H1 (cell line): ENCODE measurements at regions of chr1 and their contacts with region 1.

Region 1: DNA sequence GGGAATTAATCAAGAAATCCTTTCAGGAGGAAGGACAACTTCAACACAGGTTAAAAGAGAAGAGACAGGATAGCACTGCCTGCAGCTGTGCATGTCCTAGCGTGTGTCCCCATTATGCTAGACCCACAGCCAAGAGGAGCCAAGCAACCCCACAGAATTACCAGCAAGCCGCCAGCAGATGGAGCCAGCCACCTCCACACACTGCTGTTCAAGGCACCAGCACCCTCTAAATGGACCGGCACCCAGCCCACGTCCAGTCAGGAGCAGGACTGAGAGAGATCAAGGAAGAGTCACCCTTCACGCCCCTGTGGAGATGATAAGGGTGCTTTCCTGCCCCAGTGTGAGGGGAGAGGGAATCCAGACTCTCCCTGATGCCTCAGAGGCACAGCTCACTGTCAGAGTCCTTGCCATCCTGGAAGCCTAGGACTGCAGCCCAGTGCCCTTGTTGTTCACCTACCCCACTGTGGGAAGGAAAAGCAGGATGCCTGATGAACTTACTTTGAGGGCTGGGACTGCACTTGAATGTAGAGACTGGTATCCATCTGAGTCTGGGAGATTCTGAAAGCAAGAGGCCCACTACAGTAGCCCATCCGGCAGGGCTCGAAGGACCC is 37.1 kb upstream of the CTTNBP2NL start:
- DNase-seq: peak; percentile 41 to 82
- H3K4me3 ChIP-seq: no peak overlapping the region
- H3K27ac ChIP-seq: no peak overlapping the region
- H3K4me1 ChIP-seq: peaks cover 0 to 6% (median 0%) of the 10 kb centered on the region in 4 experiments; a peak in 1 of 7 replicates
- H3K27me3 ChIP-seq: no peaks in the 10 kb centered on the region; a peak in 1 of 7 replicates
- CTCF ChIP-seq: peak; percentile 85 to 97 (median 96)
- EP300 ChIP-seq: no peak
- POLR2A ChIP-seq: no peak
- RAD21 ChIP-seq: peak; percentile 83 to 89

Region 2: GRCh38 chr1:112285746-112286145 is 73.2 kb before region 1 on chr1:
- CTCF ChIA-PET with region 1: no interaction called
- POLR2A ChIA-PET with region 1: no interaction called
- DNase-seq: no peak
- H3K4me3 ChIP-seq: no peak overlapping the region
- H3K27ac ChIP-seq: no peak overlapping the region
- H3K4me1 ChIP-seq: no peaks in the 10 kb centered on the region
- H3K27me3 ChIP-seq: no peaks in the 10 kb centered on the region
- CTCF ChIP-seq: no peak
- EP300 ChIP-seq: no peak
- POLR2A ChIP-seq: no peak
- RAD21 ChIP-seq: no peak

Region 3: GRCh38 chr1:112337028-112337531 is 21.8 kb before region 1 on chr1:
- CTCF ChIA-PET with region 1: interaction called, 34 read pairs
- POLR2A ChIA-PET with region 1: no interaction called
- DNase-seq: no peak
- H3K4me3 ChIP-seq: no peak overlapping the region
- H3K27ac ChIP-seq: no peak overlapping the region
- H3K4me1 ChIP-seq: no peaks in the 10 kb centered on the region
- H3K27me3 ChIP-seq: no peaks in the 10 kb centered on the region
- CTCF ChIP-seq: peak; percentile 73 to 79 (median 74)
- EP300 ChIP-seq: no peak
- POLR2A ChIP-seq: no peak
- RAD21 ChIP-seq: peak; percentile 76 to 85

Region 4: DNA sequence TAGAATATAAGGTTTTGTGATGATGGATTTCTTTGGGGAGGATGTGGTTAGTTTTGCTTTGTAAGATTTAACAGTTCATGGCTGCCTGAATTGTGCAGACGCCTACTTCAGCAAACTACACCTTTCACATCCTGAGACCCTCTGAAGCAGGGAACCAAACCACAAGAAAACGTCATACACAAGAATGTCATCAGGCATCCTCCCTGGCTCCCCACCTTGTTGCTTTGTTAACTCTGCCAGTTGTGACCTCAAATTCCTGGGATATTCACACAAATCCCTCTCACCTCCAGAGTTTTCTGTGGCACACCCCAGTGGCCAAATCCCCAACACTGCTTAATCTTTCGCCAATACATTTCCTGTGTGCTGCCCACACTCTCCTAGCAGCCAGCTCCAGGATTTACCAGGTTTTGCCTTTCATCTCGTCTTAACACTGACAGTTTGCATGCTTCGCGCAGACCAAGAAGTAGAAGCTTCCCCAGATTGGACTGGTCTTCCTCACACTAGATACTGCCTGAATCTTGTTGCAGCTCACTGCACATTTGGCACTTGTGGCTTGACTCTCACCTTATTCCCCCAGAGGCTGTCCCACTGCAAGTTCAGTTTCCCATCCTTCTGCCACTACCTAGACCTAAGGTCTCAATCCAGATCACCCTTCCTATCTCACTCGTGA is 14.0 kb before region 1 on chr1:
- CTCF ChIA-PET with region 1: interaction called, 34 read pairs
- POLR2A ChIA-PET with region 1: no interaction called
- DNase-seq: no peak
- H3K4me3 ChIP-seq: no peak overlapping the region
- H3K27ac ChIP-seq: no peak overlapping the region
- H3K4me1 ChIP-seq: no peaks in the 10 kb centered on the region
- H3K27me3 ChIP-seq: no peaks in the 10 kb centered on the region
- CTCF ChIP-seq: no peak
- EP300 ChIP-seq: no peak
- POLR2A ChIP-seq: no peak
- RAD21 ChIP-seq: no peak; a peak in 1 of 4 replicates

Region 5: DNA sequence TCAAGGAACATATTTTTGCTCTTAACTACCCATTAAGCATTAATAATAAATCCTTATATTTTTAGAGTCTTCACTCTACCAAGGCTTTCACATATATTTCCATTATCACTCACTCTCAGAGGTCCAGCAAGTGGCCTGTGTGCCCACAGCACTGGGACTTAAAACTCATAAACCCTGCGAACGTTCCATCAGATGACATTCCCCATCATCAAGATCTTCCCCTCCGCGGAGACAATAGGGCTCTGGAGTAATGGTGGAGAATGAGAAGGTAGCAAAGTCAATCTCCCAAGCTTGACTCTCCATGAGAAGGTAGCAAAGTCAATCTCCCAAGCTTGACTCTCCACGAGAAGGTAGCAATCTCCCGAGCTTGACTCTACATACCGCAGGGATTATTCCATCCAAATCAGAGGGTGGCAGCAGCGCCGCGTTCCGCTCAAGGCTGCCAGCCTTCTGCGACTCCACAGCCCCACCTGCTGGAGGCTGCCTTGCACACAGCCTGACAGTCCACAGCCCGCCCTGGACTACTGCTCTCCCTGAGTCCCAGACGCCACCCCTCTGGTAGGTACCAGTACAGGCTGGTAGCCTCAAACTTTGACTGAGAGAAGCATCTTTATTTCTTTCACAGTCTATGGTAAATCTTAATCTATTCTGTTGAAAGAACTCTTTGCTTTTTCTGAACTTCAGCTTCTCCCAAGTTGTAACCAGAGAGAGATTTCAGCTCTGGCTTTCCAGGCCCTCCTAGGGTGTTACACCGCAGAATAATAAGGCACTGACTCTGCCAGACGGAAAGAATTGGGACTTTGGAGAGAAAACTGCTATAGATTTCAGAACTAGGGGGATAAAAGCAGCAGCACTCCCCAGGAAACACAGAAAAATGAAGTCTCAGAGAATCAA is 10.7 kb after region 1 on chr1:
- CTCF ChIA-PET with region 1: interaction called, 89 read pairs
- POLR2A ChIA-PET with region 1: no interaction called
- DNase-seq: peak; percentile 78 to 98
- H3K4me3 ChIP-seq: no peak overlapping the region
- H3K27ac ChIP-seq: no peak overlapping the region
- H3K4me1 ChIP-seq: no peaks in the 10 kb centered on the region
- H3K27me3 ChIP-seq: no peaks in the 10 kb centered on the region
- CTCF ChIP-seq: peak; percentile 99 to 100 (median 99)
- EP300 ChIP-seq: no peak
- POLR2A ChIP-seq: no peak
- RAD21 ChIP-seq: peak; percentile 94 to 98

Region 6: DNA sequence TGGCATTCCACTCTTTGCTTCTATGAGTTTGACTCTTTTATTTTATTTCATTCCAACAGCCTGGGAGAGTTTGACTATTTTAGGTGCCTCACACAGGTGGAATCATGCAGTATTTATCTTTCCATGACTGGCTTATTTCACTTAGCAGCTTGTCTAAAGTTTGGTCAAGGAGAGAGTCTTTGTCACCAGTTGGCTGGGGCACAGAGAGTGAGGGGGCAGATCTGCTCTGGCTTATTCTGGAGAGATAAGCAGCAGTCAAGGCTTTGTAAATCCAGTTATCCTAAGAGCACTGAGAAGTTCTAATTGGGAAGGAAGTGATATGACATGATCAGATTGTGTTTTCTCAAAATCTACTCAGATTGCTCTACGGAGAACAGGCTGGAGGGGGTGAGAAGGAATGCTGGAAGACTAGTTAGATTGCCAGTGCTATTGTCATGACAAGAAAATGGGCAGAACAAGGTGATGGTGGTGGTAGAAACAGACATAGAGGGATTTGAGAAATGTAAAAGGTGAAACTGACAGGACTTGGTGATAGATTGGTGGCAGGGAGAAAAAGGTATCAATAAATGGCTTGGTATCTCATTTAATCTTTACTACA is 25.0 kb after region 1 on chr1:
- CTCF ChIA-PET with region 1: interaction called, 15 read pairs
- POLR2A ChIA-PET with region 1: no interaction called
- DNase-seq: no peak
- H3K4me3 ChIP-seq: no peak overlapping the region
- H3K27ac ChIP-seq: no peak overlapping the region
- H3K4me1 ChIP-seq: peaks cover 0 to 3% (median 0%) of the 10 kb centered on the region in 4 experiments; a peak in 3 of 7 replicates
- H3K27me3 ChIP-seq: no peaks in the 10 kb centered on the region
- CTCF ChIP-seq: no peak
- EP300 ChIP-seq: no peak
- POLR2A ChIP-seq: no peak
- RAD21 ChIP-seq: no peak

Region 7: GRCh38 chr1:112431038-112431437 is 72.1 kb after region 1 on chr1:
- CTCF ChIA-PET with region 1: no interaction called
- POLR2A ChIA-PET with region 1: no interaction called
- DNase-seq: no peak
- H3K4me3 ChIP-seq: no peak overlapping the region
- H3K27ac ChIP-seq: no peak overlapping the region
- H3K4me1 ChIP-seq: no peaks in the 10 kb centered on the region
- H3K27me3 ChIP-seq: no peaks in the 10 kb centered on the region
- CTCF ChIP-seq: no peak
- EP300 ChIP-seq: no peak
- POLR2A ChIP-seq: no peak
- RAD21 ChIP-seq: no peak